ENCODE measurements at regions of chr22 and their contacts with region 1.

Region 1: GRCh38 chr22:40628354-40629042 is 8.0 kb downstream of the MRTFA start:
- DNase-seq: peak; percentile 68
- H3K4me3 Mint-ChIP-seq: peak overlapping the region; percentile 30
- H3K27ac Mint-ChIP-seq: peak overlapping the region; percentile 65
- H3K4me1 Mint-ChIP-seq: peaks cover 39% of the 10 kb centered on the region
- H3K27me3 Mint-ChIP-seq: no peaks in the 10 kb centered on the region
- CTCF ChIP-seq: no peak

Region 2: DNA sequence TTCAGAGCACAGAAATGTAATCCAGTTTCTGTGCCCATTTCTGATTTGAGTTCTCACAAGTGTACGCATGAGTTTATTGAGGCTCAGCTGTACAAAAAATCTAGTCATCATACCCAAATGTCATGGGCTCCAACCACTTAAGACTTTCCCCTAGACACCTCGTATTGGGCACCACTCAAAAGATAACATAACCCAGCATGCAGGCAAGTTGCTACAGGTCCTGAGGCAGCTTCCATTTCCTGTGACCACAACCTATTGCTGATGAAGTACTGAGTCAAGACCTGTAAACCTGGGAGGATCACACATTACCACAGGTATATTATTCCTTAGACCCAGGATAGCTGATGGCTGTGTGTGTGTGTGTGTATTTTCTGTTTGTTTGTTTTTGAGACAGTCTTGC is 87.2 kb before region 1 on chr22:
- CTCF ChIA-PET with region 1: interaction called, 3 read pairs
- POLR2A ChIA-PET with region 1: interaction called, 19 read pairs
- intact Hi-C with region 1: no loop called
- DNase-seq: peak; percentile 91
- H3K4me3 Mint-ChIP-seq: peak overlapping the region; percentile 36
- H3K27ac Mint-ChIP-seq: peak overlapping the region; percentile 89
- H3K4me1 Mint-ChIP-seq: peaks cover 31% of the 10 kb centered on the region
- H3K27me3 Mint-ChIP-seq: no peaks in the 10 kb centered on the region
- CTCF ChIP-seq: no peak

Region 3: DNA sequence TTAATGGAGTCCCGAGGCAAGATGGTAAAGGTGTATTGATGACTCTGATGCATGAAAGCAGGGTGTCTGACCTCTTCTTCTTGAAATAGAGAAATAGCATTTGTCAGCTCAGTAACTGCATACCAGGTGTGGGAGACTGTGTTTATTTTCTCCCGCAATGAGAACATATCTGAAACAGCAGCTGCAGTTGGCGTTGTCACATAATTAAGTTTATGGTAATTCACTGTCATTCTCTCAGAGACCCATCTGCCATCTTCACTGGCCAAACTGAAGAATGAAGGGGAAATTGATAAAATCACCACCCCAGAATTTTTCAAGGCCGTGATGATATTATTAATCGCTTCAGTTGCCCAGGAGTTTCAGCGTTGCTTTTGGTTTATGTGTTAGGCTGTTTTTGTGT is 30.7 kb after region 1 on chr22:
- CTCF ChIA-PET with region 1: no interaction called
- POLR2A ChIA-PET with region 1: no interaction called
- intact Hi-C with region 1: no loop called
- DNase-seq: no peak
- H3K4me3 Mint-ChIP-seq: no peak overlapping the region
- H3K27ac Mint-ChIP-seq: no peak overlapping the region
- H3K4me1 Mint-ChIP-seq: peaks cover 8% of the 10 kb centered on the region
- H3K27me3 Mint-ChIP-seq: no peaks in the 10 kb centered on the region
- CTCF ChIP-seq: no peak

Region 4: GRCh38 chr22:40764763-40765441 is 136.4 kb after region 1 on chr22:
- CTCF ChIA-PET with region 1: no interaction called
- POLR2A ChIA-PET with region 1: no interaction called
- intact Hi-C with region 1: no loop called
- DNase-seq: no peak
- H3K4me3 Mint-ChIP-seq: no peak overlapping the region
- H3K27ac Mint-ChIP-seq: no peak overlapping the region
- H3K4me1 Mint-ChIP-seq: no peaks in the 10 kb centered on the region
- H3K27me3 Mint-ChIP-seq: no peaks in the 10 kb centered on the region
- CTCF ChIP-seq: no peak